Activated CD4-positive, alpha-beta memory T cell treated with anti-CD3 and anti-CD28 coated beads, Interleukin-2, amount 10 ng/mL, durations not matched to agents 7 days and 5 days (primary cell): ENCODE measurements at regions of chr7 and their contacts with region 1.

Region 1: DNA sequence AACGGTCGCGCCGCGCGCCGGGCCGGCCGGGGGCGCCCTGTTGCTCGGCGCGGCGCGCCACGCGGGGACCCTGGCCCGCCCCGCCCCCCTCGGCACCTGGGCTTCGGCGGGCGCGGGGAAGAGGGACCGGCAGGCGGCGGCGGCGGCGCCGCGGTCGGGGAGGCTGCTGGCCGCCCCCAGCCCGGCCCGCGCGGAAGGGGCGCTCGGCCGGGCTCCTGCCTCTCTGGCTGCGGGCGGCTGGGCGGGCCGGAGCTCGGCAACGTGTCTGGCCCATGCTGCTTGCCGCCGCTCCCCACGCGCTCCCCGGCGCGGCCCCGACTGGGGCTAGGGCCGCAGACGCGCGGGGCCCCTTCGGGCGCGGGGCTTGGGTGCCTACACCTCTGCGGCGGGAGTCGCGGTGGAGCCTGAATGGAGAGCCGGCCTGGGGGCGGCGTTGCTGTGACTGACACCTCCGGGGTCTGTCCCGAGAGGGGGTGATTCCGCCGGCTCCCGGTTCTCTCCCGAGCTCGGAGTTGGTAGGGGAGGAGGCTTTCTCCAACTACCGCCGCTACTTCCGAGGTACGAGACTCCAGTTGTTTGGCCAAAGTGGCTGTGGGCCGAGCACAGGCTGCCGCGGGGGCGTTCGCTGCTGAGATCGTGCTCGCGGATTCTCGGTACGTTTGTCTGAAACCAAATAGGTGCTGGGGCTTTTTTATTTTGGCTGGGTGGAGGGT is 530 bp downstream of the PALS2 start:
- DNase-seq: peak; percentile 35
- H3K4me3 Mint-ChIP-seq: peak overlapping the region; percentile 89
- H3K27ac Mint-ChIP-seq: peak overlapping the region; percentile 37
- H3K4me1 Mint-ChIP-seq: peaks cover 25% of the 10 kb centered on the region
- H3K27me3 Mint-ChIP-seq: peaks cover 29% of the 10 kb centered on the region

Region 2: GRCh38 chr7:24477398-24478136 is 96.2 kb before region 1 on chr7:
- CTCF ChIA-PET with region 1: no interaction called
- POLR2A ChIA-PET with region 1: no interaction called
- DNase-seq: no peak
- H3K4me3 Mint-ChIP-seq: no peak overlapping the region
- H3K27ac Mint-ChIP-seq: no peak overlapping the region
- H3K4me1 Mint-ChIP-seq: no peaks in the 10 kb centered on the region
- H3K27me3 Mint-ChIP-seq: peaks cover 10% of the 10 kb centered on the region

Region 3: DNA sequence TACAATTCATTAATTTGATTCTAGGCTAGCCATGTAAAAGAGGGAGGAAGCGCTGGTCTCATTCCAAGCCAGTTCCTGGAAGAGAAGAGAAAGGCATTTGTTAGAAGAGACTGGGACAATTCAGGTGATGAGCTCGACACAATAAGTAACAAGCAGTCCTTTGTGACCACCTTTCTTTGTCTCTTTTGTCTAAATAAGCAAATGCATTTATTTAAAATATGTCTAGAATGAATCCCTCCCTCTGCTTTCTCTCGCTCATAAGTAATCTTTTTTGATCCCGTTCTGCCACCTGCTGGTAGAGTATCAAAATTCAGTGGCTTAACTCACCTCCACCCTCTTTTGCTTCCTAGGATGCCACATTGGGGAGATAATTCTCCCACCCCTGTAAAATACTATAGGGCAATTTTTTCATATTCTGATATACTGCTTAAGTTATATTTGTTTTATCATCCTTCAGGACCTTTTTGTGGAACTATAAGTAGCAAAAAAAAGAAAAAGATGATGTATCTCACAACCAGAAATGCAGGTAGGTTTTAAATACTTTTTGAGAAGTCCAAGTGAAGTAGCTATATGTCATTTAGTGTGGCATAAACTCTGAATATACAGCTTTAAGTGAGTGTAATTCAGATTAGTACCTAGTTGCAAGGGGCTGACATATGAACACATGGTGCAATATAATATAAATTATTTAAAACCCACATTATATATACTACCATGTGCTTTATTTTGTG is 91.9 kb after region 1 on chr7:
- CTCF ChIA-PET with region 1: interaction called, 26 read pairs
- POLR2A ChIA-PET with region 1: no interaction called
- DNase-seq: peak; percentile 34
- H3K4me3 Mint-ChIP-seq: no peak overlapping the region
- H3K27ac Mint-ChIP-seq: no peak overlapping the region
- H3K4me1 Mint-ChIP-seq: no peaks in the 10 kb centered on the region
- H3K27me3 Mint-ChIP-seq: no peaks in the 10 kb centered on the region